ENCODE measurements at regions of chr3 and their contacts with region 1.

Region 1: GRCh38 chr3:128369864-128370642 is 96.6 kb downstream of the DNAJB8 start:
- DNase-seq: no peak
- H3K4me3 ChIP-seq: no peak overlapping the region
- H3K27ac ChIP-seq: no peak overlapping the region
- H3K4me1 ChIP-seq: peaks cover 0 to 6% (median 2%) of the 10 kb centered on the region in 4 experiments; a peak in 3 of 7 replicates
- H3K27me3 ChIP-seq: no peaks in the 10 kb centered on the region; a peak in 2 of 7 replicates
- CTCF ChIP-seq: peak in 2 of 3 experiments; percentile 18 to 45; a peak in 2 of 4 replicates
- EP300 ChIP-seq: no peak
- POLR2A ChIP-seq: no peak
- RAD21 ChIP-seq: peak; percentile 12 to 21; a peak in 2 of 4 replicates

Region 2: GRCh38 chr3:128353991-128354687 is 15.9 kb before region 1 on chr3:
- CTCF ChIA-PET with region 1: interaction called, 17 read pairs
- POLR2A ChIA-PET with region 1: interaction called, 3 read pairs
- DNase-seq: no peak
- H3K4me3 ChIP-seq: no peak overlapping the region
- H3K27ac ChIP-seq: no peak overlapping the region
- H3K4me1 ChIP-seq: peaks cover 2 to 4% (median 3%) of the 10 kb centered on the region in 4 experiments
- H3K27me3 ChIP-seq: no peaks in the 10 kb centered on the region
- CTCF ChIP-seq: no peak
- EP300 ChIP-seq: no peak
- POLR2A ChIP-seq: no peak
- RAD21 ChIP-seq: no peak

Region 3: GRCh38 chr3:128395500-128396162 is 25.6 kb after region 1 on chr3:
- CTCF ChIA-PET with region 1: interaction called, 12 read pairs
- POLR2A ChIA-PET with region 1: no interaction called
- DNase-seq: no peak
- H3K4me3 ChIP-seq: no peak overlapping the region
- H3K27ac ChIP-seq: no peak overlapping the region
- H3K4me1 ChIP-seq: peaks cover 0 to 5% (median 1%) of the 10 kb centered on the region in 4 experiments; a peak in 4 of 7 replicates
- H3K27me3 ChIP-seq: no peaks in the 10 kb centered on the region
- CTCF ChIP-seq: no peak
- EP300 ChIP-seq: no peak
- POLR2A ChIP-seq: no peak
- RAD21 ChIP-seq: no peak